Prostate gland (tissue), 2 donors: ENCODE measurements at regions of chr11 and their contacts with region 1.

Region 1: GRCh38 chr11:95067039-95067840 is 521 bp downstream of the SRSF8 start:
- DNase-seq: peak; percentile 67
- H3K4me3 ChIP-seq: peak overlapping the region; percentile 85 to 86
- H3K27ac ChIP-seq: peak overlapping the region; percentile 97 to 98
- H3K4me1 ChIP-seq: no peaks in the 10 kb centered on the region
- H3K27me3 ChIP-seq: no peaks in the 10 kb centered on the region
- CTCF ChIP-seq: peak in 3 of 4 experiments; percentile 19 to 67 (median 58)
- POLR2A ChIP-seq: peak; percentile 48

Region 2: GRCh38 chr11:94948070-94948617 is 119.1 kb before region 1 on chr11:
- intact Hi-C with region 1: no loop called
- DNase-seq: no peak
- H3K4me3 ChIP-seq: no peak overlapping the region
- H3K27ac ChIP-seq: no peak overlapping the region
- H3K4me1 ChIP-seq: no peaks in the 10 kb centered on the region
- H3K27me3 ChIP-seq: no peaks in the 10 kb centered on the region
- CTCF ChIP-seq: no peak
- POLR2A ChIP-seq: no peak

Region 3: GRCh38 chr11:94973099-94973968 is 93.9 kb before region 1 on chr11 and contains the starts of genes CWC15 and KDM4D:
- intact Hi-C with region 1: loop called (anchors 5 kb)
- DNase-seq: peak; percentile 94
- H3K4me3 ChIP-seq: peak within 1 kb of the TSS; percentile 69 to 85
- H3K27ac ChIP-seq: peak within 1 kb of the TSS; percentile 73 to 78
- H3K4me1 ChIP-seq: no peaks in the 10 kb centered on the region
- H3K27me3 ChIP-seq: no peaks in the 10 kb centered on the region
- CTCF ChIP-seq: peak in 1 of 4 experiments; percentile 15
- POLR2A ChIP-seq: peak; percentile 38
- total RNA-seq, gene CWC15: 33.6 to 43.8 TPM
- total RNA-seq, gene KDM4D: 2.6 to 9.9 TPM

Region 4: DNA sequence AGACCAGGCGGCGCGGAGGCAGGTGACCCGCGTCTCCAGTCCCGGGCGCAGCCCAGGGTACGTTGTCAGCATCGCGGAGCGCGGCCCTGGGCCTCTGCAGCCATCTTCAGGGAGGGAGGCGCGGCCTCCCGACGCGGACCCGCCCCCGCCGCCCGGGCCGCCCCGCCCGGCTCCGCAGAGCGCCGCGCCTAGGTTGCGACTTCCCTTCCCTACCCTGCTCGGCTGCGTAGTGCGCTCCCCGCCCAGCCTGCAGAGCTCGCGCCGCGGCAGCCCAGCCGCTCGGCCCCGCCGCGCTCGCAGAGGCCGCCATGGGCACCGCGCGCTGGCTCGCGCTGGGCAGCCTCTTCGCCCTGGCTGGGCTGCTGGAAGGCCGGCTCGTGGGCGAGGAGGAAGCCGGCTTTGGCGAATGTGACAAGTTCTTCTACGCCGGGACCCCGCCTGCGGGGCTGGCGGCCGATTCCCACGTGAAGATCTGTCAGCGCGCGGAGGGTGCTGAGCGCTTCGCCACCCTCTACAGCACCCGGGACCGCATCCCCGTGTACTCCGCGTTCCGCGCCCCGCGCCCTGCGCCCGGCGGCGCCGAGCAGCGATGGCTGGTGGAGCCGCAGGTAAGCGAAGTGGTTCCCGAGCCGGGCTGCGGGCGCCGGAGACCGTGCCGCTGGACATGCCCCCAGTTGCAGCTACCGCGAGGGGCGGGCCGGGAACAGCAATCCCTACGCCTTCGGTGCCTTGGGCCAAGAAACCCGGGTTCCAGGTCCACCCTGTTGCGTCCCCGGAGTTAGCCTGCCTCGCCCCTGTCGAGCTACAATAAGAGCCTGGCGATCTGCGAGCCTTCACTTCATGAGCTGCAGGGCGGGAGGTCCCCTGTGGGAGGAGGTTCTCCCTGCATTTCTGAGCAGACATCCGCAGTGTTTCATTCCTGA is 22.6 kb after region 1 on chr11 and contains the start of gene ENDOD1:
- intact Hi-C with region 1: loop called (anchors 2 kb)
- DNase-seq: peak; percentile 80
- H3K4me3 ChIP-seq: peak within 1 kb of the TSS; percentile 92 to 96
- H3K27ac ChIP-seq: peak within 1 kb of the TSS; percentile 94 to 95
- H3K4me1 ChIP-seq: peaks cover 18% of the 10 kb centered on the region
- H3K27me3 ChIP-seq: no peaks in the 10 kb centered on the region
- CTCF ChIP-seq: peak in 2 of 4 experiments; percentile 18 to 30
- POLR2A ChIP-seq: peak; percentile 81
- total RNA-seq, gene ENDOD1: 49.6 to 79.8 TPM

Region 5: DNA sequence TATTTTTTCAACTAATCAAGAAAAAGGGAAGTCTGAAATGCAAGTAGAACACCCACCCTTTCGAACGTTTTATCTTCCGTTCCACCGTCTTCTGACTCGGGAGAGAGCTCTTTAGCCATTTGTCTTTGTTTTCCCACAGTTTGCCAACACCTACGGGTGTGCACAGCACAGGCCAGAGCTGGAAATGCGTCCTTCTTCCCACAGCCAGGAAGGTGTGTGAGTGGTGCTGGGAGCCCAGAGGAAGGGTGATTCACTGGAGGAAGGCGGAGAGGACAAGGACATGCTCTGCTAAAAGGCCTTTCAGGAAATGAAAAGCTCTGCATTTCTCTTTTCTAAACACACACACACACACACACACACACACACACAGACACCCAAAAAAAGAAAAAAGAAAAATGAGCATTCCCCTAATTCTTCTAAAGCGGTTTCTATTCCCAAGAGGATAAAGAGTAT is 40.9 kb after region 1 on chr11:
- intact Hi-C with region 1: no loop called
- DNase-seq: peak; percentile 52
- H3K4me3 ChIP-seq: no peak overlapping the region
- H3K27ac ChIP-seq: peak overlapping the region; percentile 78
- H3K4me1 ChIP-seq: no peaks in the 10 kb centered on the region
- H3K27me3 ChIP-seq: no peaks in the 10 kb centered on the region
- CTCF ChIP-seq: no peak
- POLR2A ChIP-seq: no peak